ENCODE measurements at regions of chr17 and their contacts with region 1.

Region 1: DNA sequence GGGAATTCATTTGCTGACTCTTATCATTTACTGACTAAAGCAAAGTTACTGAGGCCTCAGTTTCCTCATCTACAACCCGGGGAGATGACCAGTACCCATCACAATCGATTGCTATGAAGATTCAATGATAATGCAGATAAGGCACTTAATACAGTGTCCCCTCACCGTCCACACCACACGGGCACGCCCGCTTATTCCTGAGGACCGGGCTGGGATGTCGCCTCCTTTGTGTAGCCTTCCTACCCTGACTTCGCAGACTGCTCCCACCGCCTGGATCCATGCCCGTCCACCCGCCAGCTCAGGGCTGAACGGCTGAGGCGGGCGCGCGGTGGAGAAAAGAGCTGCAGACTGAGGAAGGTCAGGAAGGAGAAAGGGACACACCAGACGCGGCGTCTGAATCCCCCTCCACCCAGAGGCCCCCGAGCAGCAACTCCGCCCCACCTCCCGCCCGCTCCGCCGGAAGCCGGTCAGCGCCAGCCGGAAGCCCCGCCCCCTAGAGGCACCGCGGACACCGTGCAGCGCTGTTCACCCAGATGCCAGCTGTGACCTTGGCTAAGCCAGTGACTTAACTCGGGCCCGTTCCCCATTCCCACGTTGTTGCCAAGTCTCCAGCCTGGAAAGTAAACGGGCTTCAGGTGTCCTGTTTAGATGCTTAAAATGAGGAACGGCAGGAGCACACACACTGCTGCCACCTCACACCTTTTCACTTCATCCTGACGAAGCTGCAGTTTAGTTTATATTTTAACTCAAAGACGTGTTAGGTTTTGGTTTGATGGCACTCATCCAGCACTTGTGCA is at the start of gene KRABD2:
- DNase-seq: peak; percentile 76 to 95 (median 88)
- H3K4me3 ChIP-seq: peak within 1 kb of the TSS; percentile 56 to 96 (median 83)
- H3K27ac ChIP-seq: peak within 1 kb of the TSS; percentile 64 to 97 (median 90)
- H3K27me3 ChIP-seq: no peaks in the 10 kb centered on the region
- CTCF ChIP-seq: peak; percentile 43 to 90 (median 72)

Region 2: GRCh38 chr17:8288336-8289102 is 88.0 kb before region 1 on chr17 and contains the start of gene RANGRF:
- intact Hi-C with region 1: loop called in 1 of 2 experiments (anchors 5 kb)
- DNase-seq: peak; percentile 85 to 93 (median 91)
- H3K4me3 ChIP-seq: peak within 1 kb of the TSS; percentile 60 to 100 (median 91)
- H3K27ac ChIP-seq: peak within 1 kb of the TSS; percentile 62 to 98 (median 90)
- H3K27me3 ChIP-seq: no peaks in the 10 kb centered on the region
- CTCF ChIP-seq: peak in 20 of 56 donors; percentile 2 to 35 (median 20)
- total RNA-seq, gene RANGRF: 15.3 to 31.6 (median 22.9) TPM

Region 3: DNA sequence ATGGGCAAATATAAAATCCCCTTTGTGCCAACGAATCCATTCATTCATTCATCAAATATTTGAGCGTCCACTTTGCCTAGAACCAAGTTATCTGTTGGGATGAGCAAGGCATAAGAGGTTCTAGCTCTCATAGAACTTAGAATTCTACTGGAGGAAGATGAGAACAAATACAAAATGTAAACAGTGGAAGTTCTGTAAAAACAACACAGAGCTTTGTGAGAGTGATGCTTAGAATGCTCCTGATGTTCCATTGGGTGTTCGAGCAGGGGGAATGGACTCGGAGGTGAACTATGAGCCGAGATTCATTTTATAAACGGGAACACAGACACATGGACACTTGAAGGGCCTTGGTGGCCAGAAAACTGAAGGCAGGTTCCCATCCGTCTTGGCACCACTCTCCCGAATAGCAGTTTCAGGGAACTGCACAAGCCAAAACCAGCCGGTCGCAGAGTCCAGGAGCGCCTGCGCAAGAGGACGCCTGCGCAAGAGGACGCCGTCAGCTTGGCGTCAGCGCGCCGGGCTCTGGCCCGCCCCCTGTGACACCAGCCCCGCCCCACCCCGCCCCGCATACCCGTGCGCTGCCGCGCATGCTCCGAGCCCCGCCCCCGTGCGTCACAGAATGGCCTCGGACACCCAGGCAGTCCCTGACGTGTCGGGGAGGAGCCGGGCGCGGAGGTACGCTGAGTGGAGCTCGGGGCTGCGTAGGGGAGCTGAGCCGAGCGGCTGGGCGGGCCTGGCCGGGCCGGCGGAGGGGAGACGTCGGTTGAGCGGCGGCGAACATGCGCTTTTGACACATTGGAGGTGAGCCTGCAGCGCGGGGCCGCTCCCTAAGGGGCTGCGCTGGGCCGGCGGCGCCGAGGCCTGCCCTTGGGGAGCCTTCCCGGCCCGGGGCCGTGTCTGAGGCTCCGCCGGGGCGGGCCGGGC is 59.0 kb after region 1 on chr17 and contains the start of gene NDEL1:
- intact Hi-C with region 1: loop called (anchors 5 kb)
- DNase-seq: peak; percentile 96 to 100 (median 99)
- H3K4me3 ChIP-seq: peak within 1 kb of the TSS; percentile 72 to 100 (median 96)
- H3K27ac ChIP-seq: peak within 1 kb of the TSS; percentile 83 to 100 (median 96)
- H3K27me3 ChIP-seq: no peaks in the 10 kb centered on the region
- CTCF ChIP-seq: peak in 31 of 56 donors; percentile 2 to 56 (median 30)
- total RNA-seq, gene NDEL1: 51.0 to 118 (median 91.4) TPM